CD8-positive, alpha-beta memory T cell (primary cell): ENCODE measurements at regions of chr2 and their contacts with region 1.

Region 1: GRCh38 chr2:55636831-55637230 is 19.4 kb upstream of the PPP4R3B start:
- DNase-seq: no peak
- H3K4me3 ChIP-seq: no peak overlapping the region
- H3K4me3 Mint-ChIP-seq: no peak overlapping the region
- H3K27ac ChIP-seq: no peak overlapping the region
- H3K27ac Mint-ChIP-seq: peak overlapping the region in 1 of 8 donors; percentile 10
- H3K4me1 ChIP-seq: no peaks in the 10 kb centered on the region
- H3K4me1 Mint-ChIP-seq: peaks cover 0 to under 1% (median 0%) of the 10 kb centered on the region in 3 donors
- H3K27me3 ChIP-seq: no peaks in the 10 kb centered on the region
- H3K27me3 Mint-ChIP-seq: no peaks in the 10 kb centered on the region

Region 2: DNA sequence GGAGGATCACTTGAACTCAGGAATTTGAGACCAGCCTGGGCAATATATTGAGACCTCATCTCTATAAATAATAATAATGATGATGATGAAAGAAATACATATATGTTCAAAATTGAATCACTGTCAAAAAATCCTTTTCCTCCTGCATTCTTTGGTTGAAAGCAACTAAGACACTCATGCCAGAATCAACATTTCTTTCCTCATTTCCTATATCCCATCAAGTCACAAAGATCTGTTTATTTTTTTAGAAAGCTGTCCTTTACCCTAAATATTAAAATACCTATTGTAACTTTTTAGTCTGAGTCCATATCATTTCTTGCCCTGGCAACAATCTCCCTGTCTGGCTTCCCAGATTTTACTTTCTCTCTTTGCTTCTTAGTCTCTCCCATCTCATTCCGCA is 12.4 kb after region 1 on chr2:
- CTCF ChIA-PET with region 1: no interaction called
- POLR2A ChIA-PET with region 1: no interaction called
- DNase-seq: no peak
- H3K4me3 ChIP-seq: no peak overlapping the region
- H3K4me3 Mint-ChIP-seq: no peak overlapping the region
- H3K27ac ChIP-seq: no peak overlapping the region
- H3K27ac Mint-ChIP-seq: peak overlapping the region in 1 of 8 donors; percentile 32
- H3K4me1 ChIP-seq: no peaks in the 10 kb centered on the region
- H3K4me1 Mint-ChIP-seq: no peaks in the 10 kb centered on the region
- H3K27me3 ChIP-seq: no peaks in the 10 kb centered on the region
- H3K27me3 Mint-ChIP-seq: no peaks in the 10 kb centered on the region

Region 3: DNA sequence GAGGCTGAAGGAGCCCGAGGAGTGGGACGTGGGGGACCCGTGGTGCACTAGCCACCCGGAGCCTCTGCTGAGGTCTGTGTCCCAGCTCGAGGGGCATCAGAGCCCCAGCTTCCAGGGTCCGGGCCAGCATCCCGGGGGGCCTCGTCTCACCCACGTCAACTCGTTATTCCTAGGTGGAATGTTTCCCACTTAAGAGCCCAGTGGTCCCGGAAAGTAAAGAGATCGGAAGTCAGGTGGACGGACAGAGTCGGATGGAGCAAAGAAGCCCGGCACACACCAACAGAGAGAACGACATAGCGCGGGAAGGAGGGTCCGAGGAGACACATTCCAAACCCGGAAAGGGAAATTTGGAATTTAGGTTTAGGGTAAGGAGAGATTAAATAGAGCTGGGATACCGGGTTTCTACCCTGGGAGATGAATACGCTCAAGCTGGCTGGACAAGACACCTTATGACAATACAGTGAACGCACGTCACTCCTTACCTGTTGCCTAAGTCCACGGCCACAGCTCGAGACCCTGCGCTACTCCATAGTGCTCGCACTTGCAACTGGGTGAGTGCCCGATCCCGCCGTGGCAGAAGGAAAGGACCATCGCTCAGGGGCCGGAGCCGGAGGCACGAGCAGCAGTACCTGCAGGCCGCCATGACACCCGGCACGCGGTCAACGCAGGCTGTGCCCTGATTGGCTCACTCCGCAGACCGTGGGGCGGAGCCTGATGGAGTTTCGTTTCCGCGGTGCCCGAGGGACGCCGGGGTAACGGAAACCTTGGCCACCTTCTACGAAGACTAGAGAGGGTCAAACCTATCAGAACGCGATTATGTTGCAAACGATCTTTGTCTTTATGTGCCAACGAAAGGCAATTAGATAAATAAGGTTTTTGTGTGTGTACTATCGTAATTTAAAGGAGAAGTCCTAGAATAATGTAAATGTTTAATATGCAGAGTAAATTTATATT is 56.6 kb after region 1 on chr2 and contains the start of gene PNPT1:
- CTCF ChIA-PET with region 1: no interaction called
- POLR2A ChIA-PET with region 1: interaction called, 15 read pairs
- DNase-seq: peak; percentile 85 to 93 (median 89)
- H3K4me3 ChIP-seq: peak within 1 kb of the TSS; percentile 100
- H3K4me3 Mint-ChIP-seq: peak within 1 kb of the TSS; percentile 96 to 99 (median 98)
- H3K27ac ChIP-seq: peak within 1 kb of the TSS; percentile 76
- H3K27ac Mint-ChIP-seq: peak within 1 kb of the TSS; percentile 88 to 96 (median 94)
- H3K4me1 ChIP-seq: peaks cover 18% of the 10 kb centered on the region
- H3K4me1 Mint-ChIP-seq: peaks cover 31 to 55% (median 47%) of the 10 kb centered on the region in 3 donors
- H3K27me3 ChIP-seq: no peaks in the 10 kb centered on the region
- H3K27me3 Mint-ChIP-seq: no peaks in the 10 kb centered on the region
- total RNA-seq, gene PNPT1: 60.2 to 74.9 TPM